ENCODE measurements at regions of chr7 and their contacts with region 1.

Region 1: GRCh38 chr7:135274495-135275268 is 41.0 kb downstream of the STRA8 start:
- DNase-seq: peak; percentile 51 to 80 (median 66)
- ATAC-seq: peak; percentile 82
- H3K4me3 ChIP-seq: no peak overlapping the region
- H3K4me3 Mint-ChIP-seq: no peak overlapping the region
- H3K27ac ChIP-seq: no peak overlapping the region
- H3K27ac Mint-ChIP-seq: no peak overlapping the region
- H3K4me1 ChIP-seq: no peaks in the 10 kb centered on the region
- H3K4me1 Mint-ChIP-seq: no peaks in the 10 kb centered on the region
- H3K27me3 ChIP-seq: peaks cover 0 to 3% of the 10 kb centered on the region in 2 experiments
- H3K27me3 Mint-ChIP-seq: peaks cover 3% of the 10 kb centered on the region
- CTCF ChIP-seq: peak; percentile 97

Region 2: GRCh38 chr7:135645296-135645904 is 370.7 kb after region 1 on chr7:
- CTCF ChIA-PET with region 1: interaction called, 20 read pairs
- POLR2A ChIA-PET with region 1: interaction called, 5 read pairs
- intact Hi-C with region 1: loop called (anchors 1 to 2 kb)
- DNase-seq: peak in 4 of 14 experiments; percentile 20 to 64 (median 56)
- ATAC-seq: peak; percentile 92
- H3K4me3 ChIP-seq: no peak overlapping the region
- H3K4me3 Mint-ChIP-seq: no peak overlapping the region
- H3K27ac ChIP-seq: no peak overlapping the region
- H3K27ac Mint-ChIP-seq: no peak overlapping the region
- H3K4me1 ChIP-seq: no peaks in the 10 kb centered on the region
- H3K4me1 Mint-ChIP-seq: no peaks in the 10 kb centered on the region
- H3K27me3 ChIP-seq: no peaks in the 10 kb centered on the region
- H3K27me3 Mint-ChIP-seq: no peaks in the 10 kb centered on the region
- CTCF ChIP-seq: peak; percentile 77

Measured in CD4-positive, alpha-beta T cell (primary cell).